Dendritic cell treated with granulocyte-macrophage colony-stimulating factor and Interleukin-4, amounts not matched to agents 40 ng/mL and 50 ng/mL, for 4 days (primary cell): ENCODE measurements at regions of chr3 and their contacts with region 1.

Region 1: DNA sequence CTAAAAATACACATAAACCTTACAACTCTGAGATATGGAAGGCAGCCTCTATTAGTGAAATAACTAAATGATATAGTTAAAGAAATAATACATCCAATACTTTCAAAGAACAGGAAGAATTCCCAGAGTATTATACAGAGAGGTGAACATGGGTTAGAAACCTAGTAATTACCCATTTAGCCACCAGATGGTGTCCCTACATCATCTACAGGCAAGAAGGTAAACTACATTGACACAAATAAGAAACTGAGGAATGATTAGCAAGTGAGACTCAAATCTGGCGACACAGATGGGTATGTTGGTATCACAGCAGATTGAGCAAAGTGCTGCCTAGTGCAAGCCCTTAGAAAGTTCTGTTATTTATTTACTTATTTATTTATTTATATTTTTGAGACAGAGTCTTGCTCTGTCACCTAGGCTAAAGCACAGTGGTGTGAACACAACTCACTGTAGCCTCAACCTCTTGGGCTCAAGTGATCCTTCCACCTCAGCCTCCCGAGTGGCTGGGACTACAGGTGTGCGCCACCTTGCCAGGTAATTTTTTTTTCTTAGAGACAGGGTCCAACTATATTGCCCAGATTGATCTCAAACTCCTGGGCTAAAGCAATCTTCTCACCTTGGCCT is 28.2 kb downstream of the NEK4 start:
- H3K4me3 Mint-ChIP-seq: no peak overlapping the region
- H3K27ac Mint-ChIP-seq: no peak overlapping the region
- H3K4me1 Mint-ChIP-seq: no peaks in the 10 kb centered on the region
- H3K27me3 Mint-ChIP-seq: no peaks in the 10 kb centered on the region

Region 2: GRCh38 chr3:52798978-52799476 is 56.5 kb after region 1 on chr3:
- intact Hi-C with region 1: loop called (anchors 1 kb)
- H3K4me3 Mint-ChIP-seq: no peak overlapping the region
- H3K27ac Mint-ChIP-seq: no peak overlapping the region
- H3K4me1 Mint-ChIP-seq: no peaks in the 10 kb centered on the region
- H3K27me3 Mint-ChIP-seq: peaks cover 2% of the 10 kb centered on the region

Region 3: GRCh38 chr3:52820736-52821135 is 78.2 kb after region 1 on chr3:
- intact Hi-C with region 1: loop called (anchors 5 kb)
- H3K4me3 Mint-ChIP-seq: no peak overlapping the region
- H3K27ac Mint-ChIP-seq: no peak overlapping the region
- H3K4me1 Mint-ChIP-seq: no peaks in the 10 kb centered on the region
- H3K27me3 Mint-ChIP-seq: no peaks in the 10 kb centered on the region

Region 4: GRCh38 chr3:52934630-52935530 is 192.3 kb after region 1 on chr3:
- intact Hi-C with region 1: loop called (anchors 5 kb)
- H3K4me3 Mint-ChIP-seq: no peak overlapping the region
- H3K27ac Mint-ChIP-seq: no peak overlapping the region
- H3K4me1 Mint-ChIP-seq: peaks cover 5% of the 10 kb centered on the region
- H3K27me3 Mint-ChIP-seq: no peaks in the 10 kb centered on the region

Region 5: DNA sequence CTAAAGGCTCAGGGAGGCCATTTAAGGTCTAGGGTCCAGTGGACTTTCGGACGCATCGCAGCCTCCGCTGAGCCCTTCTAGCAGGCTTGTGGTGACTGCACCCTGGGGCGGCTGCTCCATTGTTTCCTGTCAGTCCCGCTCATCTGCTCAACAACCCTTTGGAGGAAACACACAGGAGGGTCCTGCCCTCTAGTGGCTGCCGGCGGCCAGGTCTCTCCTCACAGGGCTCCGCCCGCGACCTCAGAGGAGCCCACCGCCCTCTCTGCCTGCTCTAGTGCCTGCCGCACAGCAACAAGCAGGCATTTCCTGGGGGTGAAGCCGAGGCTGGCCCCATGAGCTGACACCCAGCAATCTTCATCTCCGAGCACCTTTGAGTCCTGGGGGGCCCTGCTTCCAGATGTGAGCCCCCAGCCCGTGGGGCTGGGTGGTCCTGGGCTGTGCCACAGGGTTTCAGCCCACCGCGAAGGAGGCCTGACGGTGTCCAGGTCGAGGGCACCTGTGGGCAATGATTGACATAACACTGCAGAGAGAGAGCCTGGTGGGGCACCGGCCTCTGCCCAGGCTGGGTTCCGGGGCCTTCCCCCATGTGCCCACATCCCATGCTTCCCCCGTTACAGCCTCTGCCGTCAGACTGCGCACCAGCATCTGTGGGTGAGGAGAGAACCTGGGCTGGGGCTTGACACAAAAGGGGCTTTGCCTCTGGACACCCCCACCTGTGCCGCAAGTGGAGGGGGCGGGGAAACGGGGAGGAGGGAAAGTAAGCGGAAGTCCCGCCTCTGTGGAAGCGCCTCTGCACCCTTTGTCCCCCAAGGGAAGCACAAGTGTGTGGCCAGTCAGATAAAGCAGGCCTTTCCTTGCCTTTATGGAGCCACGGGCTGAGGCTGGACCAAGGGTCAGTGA is 330.4 kb after region 1 on chr3:
- intact Hi-C with region 1: loop called (anchors 1 kb)
- H3K4me3 Mint-ChIP-seq: peak overlapping the region; percentile 86
- H3K27ac Mint-ChIP-seq: peak overlapping the region; percentile 88
- H3K4me1 Mint-ChIP-seq: peaks cover 23% of the 10 kb centered on the region
- H3K27me3 Mint-ChIP-seq: peaks cover 3% of the 10 kb centered on the region